Caco-2 (cell line): ENCODE measurements at regions of chr11 and their contacts with region 1.

Region 1: DNA sequence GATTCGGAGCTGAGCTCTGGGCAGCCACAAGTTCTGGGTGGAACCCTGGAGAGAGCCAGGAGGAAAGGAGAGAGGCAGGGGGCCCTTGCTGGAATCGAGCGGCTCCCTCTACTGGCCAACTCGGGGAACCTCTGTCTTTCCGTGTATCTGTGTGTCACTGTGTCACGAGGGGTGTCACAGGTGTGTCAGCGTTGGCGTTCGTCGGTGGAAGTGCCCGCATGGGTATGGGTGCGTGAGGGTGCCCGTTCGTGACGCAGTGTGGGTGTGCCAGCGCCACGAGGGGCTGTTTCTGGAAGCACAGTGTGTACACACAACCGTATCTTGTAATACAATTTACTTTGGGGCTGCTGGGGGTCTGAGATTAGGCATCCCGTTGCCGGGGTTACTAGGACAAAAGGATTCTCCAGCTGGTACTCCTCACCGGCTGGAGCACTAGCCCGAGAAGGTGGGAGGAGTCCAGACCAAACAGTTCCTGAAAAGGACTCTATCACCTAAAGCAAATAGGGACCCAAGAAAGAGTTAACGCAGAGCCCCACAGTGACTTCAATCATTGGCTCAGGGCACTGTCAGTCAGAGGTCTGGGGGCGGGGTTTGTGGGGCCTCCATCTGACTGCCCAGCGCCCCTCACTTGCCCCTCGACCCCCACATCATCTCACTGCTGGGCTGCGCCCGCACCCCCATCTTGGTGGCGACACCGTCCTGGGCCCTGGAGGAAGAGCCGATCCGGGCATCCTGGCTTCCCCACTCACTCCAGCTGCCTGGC is 2.6 kb upstream of the BCL9L start:
- DNase-seq: peak; percentile 97 to 99
- H3K4me3 ChIP-seq: peak overlapping the region; percentile 64
- H3K4me3 Mint-ChIP-seq: peak overlapping the region; percentile 79
- H3K27ac Mint-ChIP-seq: peak overlapping the region; percentile 84
- H3K4me1 ChIP-seq: peaks cover 27% of the 10 kb centered on the region
- H3K4me1 Mint-ChIP-seq: peaks cover 28% of the 10 kb centered on the region
- H3K27me3 ChIP-seq: no peaks in the 10 kb centered on the region
- H3K27me3 Mint-ChIP-seq: no peaks in the 10 kb centered on the region
- CTCF ChIP-seq: peak; percentile 98

Region 2: GRCh38 chr11:118640332-118641154 is 287.7 kb before region 1 on chr11:
- CTCF ChIA-PET with region 1: no interaction called
- POLR2A ChIA-PET with region 1: no interaction called
- intact Hi-C with region 1: no loop called
- DNase-seq: peak in 1 of 2 experiments; percentile 47
- H3K4me3 ChIP-seq: no peak overlapping the region
- H3K4me3 Mint-ChIP-seq: no peak overlapping the region
- H3K27ac Mint-ChIP-seq: no peak overlapping the region
- H3K4me1 ChIP-seq: no peaks in the 10 kb centered on the region
- H3K4me1 Mint-ChIP-seq: no peaks in the 10 kb centered on the region
- H3K27me3 ChIP-seq: no peaks in the 10 kb centered on the region
- H3K27me3 Mint-ChIP-seq: no peaks in the 10 kb centered on the region
- CTCF ChIP-seq: peak; percentile 29 to 62

Region 3: GRCh38 chr11:118689851-118690552 is 238.3 kb before region 1 on chr11:
- CTCF ChIA-PET with region 1: interaction called, 7 read pairs
- POLR2A ChIA-PET with region 1: no interaction called
- intact Hi-C with region 1: loop called (anchors 1 kb)
- DNase-seq: peak; percentile 92 to 96
- H3K4me3 ChIP-seq: peak overlapping the region; percentile 25
- H3K4me3 Mint-ChIP-seq: peak overlapping the region; percentile 74
- H3K27ac Mint-ChIP-seq: peak overlapping the region; percentile 80
- H3K4me1 ChIP-seq: peaks cover 14% of the 10 kb centered on the region
- H3K4me1 Mint-ChIP-seq: peaks cover 23% of the 10 kb centered on the region
- H3K27me3 ChIP-seq: no peaks in the 10 kb centered on the region
- H3K27me3 Mint-ChIP-seq: no peaks in the 10 kb centered on the region
- CTCF ChIP-seq: peak; percentile 88 to 100

Region 4: DNA sequence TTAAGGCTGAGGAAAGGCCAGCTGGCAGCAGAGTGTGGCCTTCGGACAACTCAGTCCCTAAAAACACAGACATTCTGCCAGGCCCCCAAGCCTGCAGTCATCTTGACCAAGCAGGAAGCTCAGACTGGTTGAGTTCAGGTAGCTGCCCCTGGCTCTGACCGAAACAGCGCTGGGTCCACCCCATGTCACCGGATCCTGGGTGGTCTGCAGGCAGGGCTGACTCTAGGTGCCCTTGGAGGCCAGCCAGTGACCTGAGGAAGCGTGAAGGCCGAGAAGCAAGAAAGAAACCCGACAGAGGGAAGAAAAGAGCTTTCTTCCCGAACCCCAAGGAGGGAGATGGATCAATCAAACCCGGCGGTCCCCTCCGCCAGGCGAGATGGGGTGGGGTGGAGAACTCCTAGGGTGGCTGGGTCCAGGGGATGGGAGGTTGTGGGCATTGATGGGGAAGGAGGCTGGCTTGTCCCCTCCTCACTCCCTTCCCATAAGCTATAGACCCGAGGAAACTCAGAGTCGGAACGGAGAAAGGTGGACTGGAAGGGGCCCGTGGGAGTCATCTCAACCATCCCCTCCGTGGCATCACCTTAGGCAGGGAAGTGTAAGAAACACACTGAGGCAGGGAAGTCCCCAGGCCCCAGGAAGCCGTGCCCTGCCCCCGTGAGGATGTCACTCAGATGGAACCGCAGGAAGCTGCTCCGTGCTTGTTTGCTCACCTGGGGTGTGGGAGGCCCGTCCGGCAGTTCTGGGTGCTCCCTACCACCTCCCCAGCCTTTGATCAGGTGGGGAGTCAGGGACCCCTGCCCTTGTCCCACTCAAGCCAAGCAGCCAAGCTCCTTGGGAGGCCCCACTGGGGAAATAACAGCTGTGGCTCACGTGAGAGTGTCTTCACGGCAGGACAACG is 32.9 kb before region 1 on chr11:
- CTCF ChIA-PET with region 1: interaction called, 8 read pairs
- POLR2A ChIA-PET with region 1: interaction called, 6 read pairs
- intact Hi-C with region 1: loop called (anchors 5 kb)
- DNase-seq: peak; percentile 62 to 67
- H3K4me3 ChIP-seq: no peak overlapping the region
- H3K4me3 Mint-ChIP-seq: peak overlapping the region; percentile 3
- H3K27ac Mint-ChIP-seq: peak overlapping the region; percentile 70
- H3K4me1 ChIP-seq: 0 out of 2 replicates have a peak, but pooled peaks cover 3% of the 10 kb centered on the region
- H3K4me1 Mint-ChIP-seq: peaks cover 17% of the 10 kb centered on the region
- H3K27me3 ChIP-seq: no peaks in the 10 kb centered on the region
- H3K27me3 Mint-ChIP-seq: no peaks in the 10 kb centered on the region
- CTCF ChIP-seq: no peak

Region 5: DNA sequence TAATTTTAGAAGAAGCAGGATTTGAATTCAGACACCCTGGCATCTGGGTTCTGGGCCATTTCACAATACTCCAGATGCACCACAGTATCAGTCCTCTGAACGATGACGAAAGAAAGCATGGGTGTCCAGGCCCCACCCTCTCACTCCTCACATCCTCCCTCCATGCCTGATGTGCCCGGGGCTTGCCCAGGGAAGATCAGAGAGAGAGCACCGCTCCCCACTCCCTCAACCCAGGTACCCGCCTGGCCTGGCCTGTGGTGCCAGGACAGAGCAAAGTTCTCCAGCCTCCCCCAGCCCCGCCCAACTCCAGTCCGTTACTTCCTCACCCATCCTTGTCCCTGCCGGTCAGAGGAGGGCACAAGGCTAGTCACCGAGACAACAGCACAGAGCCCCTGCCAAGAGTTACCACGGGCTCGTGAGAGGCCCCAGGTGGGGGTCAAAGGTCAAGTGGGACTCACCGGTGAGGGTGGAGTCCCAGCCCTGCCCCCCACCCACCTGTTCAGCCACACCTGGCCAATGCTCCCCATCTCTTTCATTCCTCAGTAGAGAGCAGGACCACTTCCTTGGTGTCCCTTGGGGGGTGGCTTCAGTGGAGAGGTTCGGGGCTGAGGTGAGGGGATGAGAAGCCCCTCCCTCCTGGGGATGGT is 10.7 kb before region 1 on chr11:
- CTCF ChIA-PET with region 1: interaction called, 170 read pairs
- POLR2A ChIA-PET with region 1: interaction called, 171 read pairs
- intact Hi-C with region 1: no loop called
- DNase-seq: peak; percentile 90 to 94
- H3K4me3 ChIP-seq: peak overlapping the region; percentile 22
- H3K4me3 Mint-ChIP-seq: peak overlapping the region; percentile 78
- H3K27ac Mint-ChIP-seq: peak overlapping the region; percentile 100
- H3K4me1 ChIP-seq: peaks cover 91% of the 10 kb centered on the region
- H3K4me1 Mint-ChIP-seq: peaks cover 72% of the 10 kb centered on the region
- H3K27me3 ChIP-seq: no peaks in the 10 kb centered on the region
- H3K27me3 Mint-ChIP-seq: no peaks in the 10 kb centered on the region
- CTCF ChIP-seq: no peak

Region 6: DNA sequence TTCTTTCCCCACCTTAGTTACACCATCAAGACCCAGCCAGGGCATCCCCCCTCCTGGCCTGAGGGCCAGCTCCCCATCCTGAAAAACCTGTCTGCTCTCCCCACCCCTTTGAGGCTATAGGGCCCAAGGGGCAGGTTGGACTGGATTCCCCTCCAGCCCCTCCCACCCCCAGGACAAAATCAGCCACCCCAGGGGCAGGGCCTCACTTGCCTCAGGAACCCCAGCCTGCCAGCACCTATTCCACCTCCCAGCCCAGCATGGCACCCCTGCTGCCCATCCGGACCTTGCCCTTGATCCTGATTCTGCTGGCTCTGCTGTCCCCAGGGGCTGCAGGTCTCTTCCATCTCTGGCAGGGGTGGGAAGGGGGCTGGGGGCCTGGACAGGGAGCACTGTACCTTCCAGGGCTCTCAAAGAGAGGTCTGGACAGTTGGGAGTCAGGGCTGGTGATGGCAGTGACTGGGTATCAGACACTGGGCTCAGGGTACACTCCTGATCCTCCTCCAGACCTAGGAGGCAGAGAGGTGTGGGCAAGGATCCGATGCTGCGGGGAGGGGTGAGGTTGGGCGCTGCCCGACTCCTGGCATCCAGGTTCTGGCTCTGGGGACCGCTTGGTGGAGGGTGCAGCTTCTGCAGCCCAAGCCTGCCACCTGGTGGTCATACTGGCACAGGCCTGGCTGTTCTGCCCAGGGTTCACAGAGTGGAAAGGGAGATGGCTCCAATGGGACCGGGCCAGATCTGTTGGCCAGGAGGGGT is 28.0 kb after region 1 on chr11 and contains the start of gene UPK2:
- CTCF ChIA-PET with region 1: interaction called, 12 read pairs
- POLR2A ChIA-PET with region 1: interaction called, 6 read pairs
- intact Hi-C with region 1: loop called (anchors 1 kb)
- DNase-seq: peak; percentile 93 to 96
- H3K4me3 ChIP-seq: no peak within 1 kb of the TSS
- H3K4me3 Mint-ChIP-seq: peak within 1 kb of the TSS; percentile 5
- H3K27ac Mint-ChIP-seq: peak within 1 kb of the TSS; percentile 34
- H3K4me1 ChIP-seq: peaks cover 15% of the 10 kb centered on the region
- H3K4me1 Mint-ChIP-seq: peaks cover 15% of the 10 kb centered on the region
- H3K27me3 ChIP-seq: no peaks in the 10 kb centered on the region
- H3K27me3 Mint-ChIP-seq: peaks cover 2% of the 10 kb centered on the region
- CTCF ChIP-seq: peak; percentile 99 to 100
- total RNA-seq, gene UPK2: 1.8 and 3.5 TPM in 2 replicates

Region 7: DNA sequence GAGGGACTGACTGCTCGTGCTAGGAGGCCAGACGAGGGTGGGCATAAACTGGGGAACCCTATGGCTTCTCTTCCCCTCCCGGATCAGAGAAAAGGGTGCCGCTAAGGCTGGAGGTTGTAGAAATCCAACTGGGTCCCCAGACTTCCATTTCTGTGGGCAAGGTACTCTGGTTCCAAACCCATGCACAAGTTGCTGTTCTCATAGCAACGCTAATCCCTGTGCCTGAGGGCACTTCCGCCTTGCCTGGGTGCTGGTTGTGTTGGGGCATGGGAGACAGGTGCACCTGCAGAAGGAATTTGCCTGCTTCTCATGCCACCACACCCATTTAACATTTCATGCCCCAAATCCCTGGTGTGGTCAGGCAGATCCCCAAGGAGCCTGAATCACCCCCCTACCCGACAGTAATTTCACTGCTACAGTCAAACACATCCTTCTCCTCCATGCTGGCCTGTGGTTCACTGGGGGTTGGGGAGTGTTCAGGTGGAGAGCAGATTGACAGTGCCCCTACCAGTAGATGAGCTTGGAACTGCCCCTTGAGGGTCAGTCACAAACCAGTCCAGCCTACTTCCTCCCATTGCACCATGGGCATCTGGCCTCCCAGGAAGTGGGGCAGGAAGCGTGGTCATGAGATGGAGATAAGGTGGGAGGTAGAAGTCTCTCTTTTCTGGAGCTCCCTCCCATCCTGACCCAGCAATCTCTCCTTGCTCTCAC is 180.0 kb after region 1 on chr11:
- CTCF ChIA-PET with region 1: no interaction called
- POLR2A ChIA-PET with region 1: no interaction called
- intact Hi-C with region 1: no loop called
- DNase-seq: peak; percentile 77 to 79
- H3K4me3 ChIP-seq: peak overlapping the region; percentile 85
- H3K4me3 Mint-ChIP-seq: peak overlapping the region; percentile 79
- H3K27ac Mint-ChIP-seq: peak overlapping the region; percentile 27
- H3K4me1 ChIP-seq: peaks cover 24% of the 10 kb centered on the region
- H3K4me1 Mint-ChIP-seq: peaks cover 25% of the 10 kb centered on the region
- H3K27me3 ChIP-seq: no peaks in the 10 kb centered on the region
- H3K27me3 Mint-ChIP-seq: no peaks in the 10 kb centered on the region
- CTCF ChIP-seq: no peak